ENCODE measurements at regions of chr19 and their contacts with region 1.

Region 1: DNA sequence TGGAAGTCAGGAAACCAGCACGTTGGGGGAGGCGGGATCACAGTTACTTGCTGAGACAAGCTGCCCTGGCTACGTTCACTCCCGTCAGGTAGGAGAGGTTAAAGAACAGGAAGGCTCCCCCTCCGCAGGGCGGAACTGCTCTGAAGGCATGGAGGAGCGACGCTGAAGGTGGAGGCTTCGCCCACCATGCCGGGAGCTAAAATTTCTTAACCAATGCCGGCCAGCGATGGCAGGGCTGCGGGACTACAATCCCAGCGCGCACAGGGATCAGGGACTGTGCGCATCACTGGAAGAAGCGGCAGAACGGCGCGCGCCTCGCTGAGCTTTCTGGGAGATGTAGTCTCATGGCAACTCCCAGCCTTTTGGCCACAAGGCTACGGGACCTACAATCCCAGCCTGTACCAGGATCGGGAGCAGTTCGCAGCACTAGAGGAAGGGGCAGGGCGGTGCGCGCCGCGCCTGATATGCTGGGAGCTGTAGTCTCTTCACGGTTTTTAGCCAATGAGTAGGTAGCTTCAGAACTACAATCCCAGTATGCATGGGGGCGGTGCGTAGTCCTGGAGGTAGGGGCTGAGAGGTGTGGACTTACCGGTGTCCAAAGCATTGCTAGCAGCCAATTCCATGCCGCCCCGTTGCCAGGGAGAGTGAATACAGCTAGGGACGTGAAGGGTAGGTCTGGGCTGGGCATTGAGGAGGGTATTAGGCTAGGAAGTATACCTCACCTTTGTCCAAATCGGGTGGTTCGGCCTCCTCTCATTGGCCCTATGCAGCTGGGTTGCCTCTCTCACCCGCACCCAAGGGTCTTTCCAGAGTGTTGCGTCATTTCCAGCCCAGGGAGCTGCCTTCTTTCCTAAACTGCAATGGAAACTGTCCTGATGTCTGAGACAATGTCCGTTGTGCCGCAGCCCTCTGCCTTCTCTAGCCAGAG is 12.8 kb upstream of the ZNF682 start:
- DNase-seq: peak; percentile 95 to 100 (median 99)
- H3K4me3 ChIP-seq: peak overlapping the region; percentile 58 to 95 (median 79)
- H3K27ac ChIP-seq: peak overlapping the region in 56 of 59 donors; percentile 24 to 94 (median 82)
- H3K27me3 ChIP-seq: no peaks in the 10 kb centered on the region
- CTCF ChIP-seq: peak in 43 of 56 donors; percentile 8 to 60 (median 31)

Region 2: GRCh38 chr19:19732579-19733501 is 319.3 kb before region 1 on chr19 and contains the start of gene ZNF14:
- intact Hi-C with region 1: loop called in 1 of 2 experiments (anchors 5 kb)
- DNase-seq: peak; percentile 86 to 96 (median 94)
- H3K4me3 ChIP-seq: peak within 1 kb of the TSS; percentile 31 to 100 (median 95)
- H3K27ac ChIP-seq: peak within 1 kb of the TSS in 53 of 59 donors; percentile 1 to 92 (median 76)
- H3K27me3 ChIP-seq: no peaks in the 10 kb centered on the region
- CTCF ChIP-seq: peak in 25 of 56 donors; percentile 1 to 46 (median 20)
- total RNA-seq, gene ZNF14: 6.8 to 18.5 (median 11.9) TPM

Region 3: GRCh38 chr19:20077791-20078463 is 25.8 kb after region 1 on chr19 and contains the start of gene ZNF90:
- intact Hi-C with region 1: loop called in 1 of 2 experiments (anchors 2 kb)
- DNase-seq: peak; percentile 82 to 97 (median 93)
- H3K4me3 ChIP-seq: peak within 1 kb of the TSS; percentile 32 to 84 (median 63)
- H3K27ac ChIP-seq: peak within 1 kb of the TSS in 7 of 59 donors; percentile 14 to 53 (median 45)
- H3K27me3 ChIP-seq: peaks cover 0 to 13% (median 0%) of the 10 kb centered on the region in 45 donors
- CTCF ChIP-seq: peak in 9 of 56 donors; percentile 2 to 47 (median 14)
- total RNA-seq, gene ZNF90: 0.29 to 4.5 (median 1.7) TPM

Region 4: DNA sequence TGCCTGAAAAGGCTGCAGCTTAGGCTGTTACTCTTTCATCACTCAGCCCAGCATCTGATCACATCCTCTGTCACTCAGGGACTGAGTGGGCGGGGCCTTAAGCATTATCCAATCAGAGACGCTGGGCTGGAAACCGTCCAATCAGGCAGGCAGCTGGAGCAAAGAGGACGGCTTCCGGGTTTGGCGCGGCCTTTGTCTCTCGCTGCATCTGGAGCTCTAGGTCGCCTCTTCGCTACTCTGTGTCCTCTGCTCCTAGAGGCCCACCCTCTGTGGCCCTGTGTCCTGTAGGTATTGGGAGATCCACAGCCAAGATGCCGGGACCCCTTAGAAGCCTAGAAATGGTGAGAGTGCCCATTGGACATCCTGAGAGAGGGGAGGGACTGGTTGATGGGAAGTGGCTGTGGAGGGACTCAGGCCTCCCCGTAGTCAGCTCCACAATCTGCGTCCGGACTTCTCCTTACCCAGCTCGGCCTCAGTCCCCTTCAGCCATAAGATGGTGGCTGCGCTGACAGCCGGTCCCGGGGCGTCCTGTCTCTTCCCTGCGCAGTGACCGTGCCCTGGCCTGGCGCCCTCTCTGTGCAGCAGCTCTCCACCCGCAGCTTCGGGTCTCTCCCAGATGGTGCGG is 115.0 kb after region 1 on chr19 and contains the start of gene ZNF486:
- intact Hi-C with region 1: loop called in 1 of 2 experiments (anchors 10 kb)
- DNase-seq: peak; percentile 91 to 99 (median 96)
- H3K4me3 ChIP-seq: peak within 1 kb of the TSS; percentile 48 to 93 (median 80)
- H3K27ac ChIP-seq: peak within 1 kb of the TSS in 34 of 59 donors; percentile 0 to 76 (median 46)
- H3K27me3 ChIP-seq: no peaks in the 10 kb centered on the region
- CTCF ChIP-seq: peak in 9 of 56 donors; percentile 6 to 28 (median 16)
- total RNA-seq, gene ZNF486: 1.6 to 5.9 (median 3.4) TPM

Measured in dorsolateral prefrontal cortex (tissue), 120 donors.